Naive thymus-derived CD4-positive, alpha-beta T cell (primary cell): ENCODE measurements at regions of chr5 and their contacts with region 1.

Region 1: DNA sequence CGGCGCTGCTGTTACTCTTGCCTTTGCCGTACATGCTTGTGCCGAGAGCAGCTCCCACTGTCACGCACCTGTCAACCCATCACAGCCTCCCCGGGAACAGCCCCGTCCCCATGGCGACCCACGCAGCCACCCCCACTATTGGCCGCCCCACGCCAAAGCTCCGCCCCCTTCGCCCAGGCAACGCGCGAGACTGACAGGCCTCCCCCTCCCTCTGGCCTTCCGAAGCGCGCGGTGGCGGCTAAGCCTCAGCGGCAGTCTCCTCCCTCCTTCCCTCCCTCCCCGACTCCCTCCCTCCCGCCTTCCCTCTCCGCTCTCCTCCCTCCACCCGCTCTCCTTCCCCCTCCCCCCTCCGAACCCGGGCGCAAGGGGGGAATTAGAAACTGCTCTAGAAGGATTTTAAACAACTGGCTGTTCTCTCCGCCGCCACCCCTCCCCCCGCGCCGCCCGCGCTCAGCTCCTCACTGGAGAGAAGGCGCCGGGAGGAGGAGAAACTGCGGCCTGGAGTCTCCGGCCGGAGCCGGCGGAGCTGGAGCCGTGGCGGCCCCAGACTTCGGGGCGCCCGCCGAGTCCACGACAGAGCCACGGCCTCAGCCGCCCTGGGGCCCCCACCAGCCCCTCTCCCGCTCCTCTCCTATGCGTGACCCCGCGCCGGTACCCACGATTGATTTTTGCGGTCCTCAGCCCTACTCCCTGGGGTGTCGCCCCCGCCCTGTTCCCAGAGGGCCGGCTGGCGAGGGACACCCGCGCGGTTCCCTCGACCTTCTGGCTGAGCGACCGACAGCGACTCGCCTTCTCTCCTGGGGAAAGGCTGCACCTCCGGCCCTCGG is at the start of gene SSBP2:
- DNase-seq: peak; percentile 99 to 100 (median 99)
- ATAC-seq: peak; percentile 93
- H3K4me3 ChIP-seq: peak within 1 kb of the TSS; percentile 61
- H3K4me3 Mint-ChIP-seq: peak within 1 kb of the TSS; percentile 92 to 100 (median 96)
- H3K27ac ChIP-seq: peak within 1 kb of the TSS; percentile 87
- H3K27ac Mint-ChIP-seq: peak within 1 kb of the TSS; percentile 81 to 96 (median 94)
- H3K4me1 ChIP-seq: peaks cover 6 to 13% of the 10 kb centered on the region in 2 donors
- H3K4me1 Mint-ChIP-seq: peaks cover 21 to 49% (median 38%) of the 10 kb centered on the region in 7 donors
- H3K27me3 ChIP-seq: no peaks in the 10 kb centered on the region
- H3K27me3 Mint-ChIP-seq: peaks cover 0 to 49% (median 0%) of the 10 kb centered on the region in 5 donors
- total RNA-seq, gene SSBP2: 36.7 to 73.1 (median 55.9) TPM

Region 2: DNA sequence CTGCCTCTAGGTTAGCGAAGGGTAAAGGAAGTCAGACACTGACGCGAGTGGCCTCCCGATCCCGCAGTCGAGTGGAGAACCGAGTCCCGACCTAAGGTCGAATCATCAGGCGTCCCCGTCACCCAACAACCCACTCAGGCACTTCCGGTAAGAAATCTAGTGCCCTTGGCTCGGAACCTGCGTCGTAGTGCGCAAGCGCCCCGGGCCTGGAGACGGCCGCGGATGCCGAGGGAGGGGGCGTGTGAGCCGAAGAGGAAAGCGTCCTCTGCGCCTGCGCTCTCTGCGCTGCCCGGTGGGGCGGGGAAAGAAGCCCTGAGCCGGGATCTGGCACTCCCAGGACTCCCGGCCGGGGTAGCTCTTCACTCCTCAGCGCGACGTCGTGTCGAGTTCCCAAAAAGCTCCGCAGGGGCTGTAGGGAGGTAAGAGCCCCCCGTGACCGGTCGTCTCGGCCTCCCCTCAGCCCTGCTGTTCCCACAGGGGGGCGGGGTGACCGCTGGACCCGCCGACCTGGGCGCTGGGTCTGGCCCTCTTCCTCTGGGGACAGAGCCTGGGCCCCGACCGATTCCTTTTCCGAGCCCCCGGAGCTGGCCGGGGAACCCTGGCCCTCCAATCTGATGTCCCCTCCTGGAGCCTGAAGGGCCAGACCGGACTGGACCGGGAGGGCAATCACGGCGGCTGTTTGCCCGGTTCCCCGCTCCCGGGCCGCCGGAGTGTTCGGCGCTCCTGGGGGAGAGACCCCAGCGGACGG is 1343.3 kb before region 1 on chr5 and contains the start of gene ZFYVE16:
- CTCF ChIA-PET with region 1: no interaction called
- POLR2A ChIA-PET with region 1: no interaction called
- intact Hi-C with region 1: loop called in 1 of 2 experiments (anchors 5 kb)
- DNase-seq: peak; percentile 93 to 98 (median 94)
- ATAC-seq: peak; percentile 93
- H3K4me3 ChIP-seq: peak within 1 kb of the TSS; percentile 94
- H3K4me3 Mint-ChIP-seq: peak within 1 kb of the TSS; percentile 91 to 99 (median 96)
- H3K27ac ChIP-seq: peak within 1 kb of the TSS; percentile 85
- H3K27ac Mint-ChIP-seq: peak within 1 kb of the TSS; percentile 97 to 100 (median 99)
- H3K4me1 ChIP-seq: peaks cover 0 to 3% of the 10 kb centered on the region in 2 donors
- H3K4me1 Mint-ChIP-seq: peaks cover 20 to 32% (median 21%) of the 10 kb centered on the region in 7 donors
- H3K27me3 ChIP-seq: no peaks in the 10 kb centered on the region
- H3K27me3 Mint-ChIP-seq: peaks cover 0 to 7% (median 0%) of the 10 kb centered on the region in 5 donors
- total RNA-seq, gene ZFYVE16: 12.0 to 32.0 (median 26.0) TPM

Region 3: DNA sequence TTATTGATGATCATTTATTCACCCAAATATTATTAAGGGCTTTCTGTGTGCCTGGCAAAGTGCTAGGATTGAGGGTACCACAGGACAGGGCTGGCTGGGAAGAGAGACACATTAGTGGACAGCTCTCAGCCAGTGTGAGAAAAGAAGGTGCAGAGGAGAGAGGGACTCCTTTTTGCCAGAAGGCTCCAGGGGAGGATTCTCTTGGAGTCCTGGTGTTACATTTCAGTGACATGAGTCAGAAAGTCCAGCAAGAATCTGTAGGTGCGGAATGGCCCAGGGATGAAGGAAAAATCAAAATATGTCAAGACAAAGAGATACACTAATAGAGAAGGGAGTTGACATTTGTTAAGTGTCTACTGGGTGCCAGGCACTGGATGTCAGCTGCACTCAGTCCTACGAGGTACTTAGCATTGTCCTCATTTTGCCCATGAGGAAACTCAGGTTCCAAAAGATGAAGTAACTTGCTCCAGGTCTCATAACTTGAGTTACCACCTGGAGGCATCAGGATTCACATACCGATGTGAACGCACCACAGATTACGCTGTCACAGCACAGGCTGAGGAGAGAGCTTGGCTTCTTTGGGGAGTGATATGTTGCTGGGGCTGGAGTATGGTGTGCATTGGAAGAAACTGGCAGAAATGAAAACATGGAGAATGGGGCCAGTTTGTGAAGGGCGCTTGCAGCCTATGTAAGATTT is 730.6 kb before region 1 on chr5:
- CTCF ChIA-PET with region 1: no interaction called
- POLR2A ChIA-PET with region 1: no interaction called
- intact Hi-C with region 1: no loop called
- DNase-seq: no peak
- ATAC-seq: no peak
- H3K4me3 ChIP-seq: no peak overlapping the region
- H3K4me3 Mint-ChIP-seq: peak overlapping the region in 7 of 10 donors; percentile 1 to 51 (median 15)
- H3K27ac ChIP-seq: no peak overlapping the region
- H3K27ac Mint-ChIP-seq: peak overlapping the region in 5 of 9 donors; percentile 49 to 93 (median 70)
- H3K4me1 ChIP-seq: peaks cover 12 to 62% of the 10 kb centered on the region in 2 donors
- H3K4me1 Mint-ChIP-seq: peaks cover 53 to 97% (median 91%) of the 10 kb centered on the region in 7 donors
- H3K27me3 ChIP-seq: no peaks in the 10 kb centered on the region
- H3K27me3 Mint-ChIP-seq: no peaks in the 10 kb centered on the region

Region 4: DNA sequence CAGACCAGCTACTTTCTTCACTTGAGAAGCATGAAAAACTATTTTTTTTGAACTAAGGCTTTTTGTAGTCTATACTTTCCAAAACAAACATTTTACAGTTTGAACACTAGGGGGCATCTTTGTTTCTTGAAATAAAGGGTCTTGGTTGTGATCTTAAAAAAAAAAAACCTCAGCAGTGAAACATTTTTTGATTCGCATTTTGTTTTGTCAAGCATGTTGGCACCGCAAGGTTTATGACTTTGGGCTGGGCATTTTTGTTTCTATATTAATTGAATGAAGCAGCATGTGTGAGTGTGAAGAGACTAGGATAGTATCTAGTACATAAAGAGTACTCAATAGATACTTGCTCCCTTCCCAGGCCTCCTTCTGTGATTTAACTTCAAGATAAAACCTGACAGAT is 325.7 kb before region 1 on chr5:
- CTCF ChIA-PET with region 1: interaction called, 4 read pairs
- POLR2A ChIA-PET with region 1: no interaction called
- intact Hi-C with region 1: loop called (anchors 1 to 2 kb)
- DNase-seq: peak in 7 of 9 donors; percentile 15 to 72 (median 58)
- ATAC-seq: peak; percentile 73
- H3K4me3 ChIP-seq: no peak overlapping the region
- H3K4me3 Mint-ChIP-seq: peak overlapping the region in 2 of 10 donors; percentile 6 to 8
- H3K27ac ChIP-seq: no peak overlapping the region
- H3K27ac Mint-ChIP-seq: peak overlapping the region in 6 of 9 donors; percentile 9 to 65 (median 48)
- H3K4me1 ChIP-seq: peaks cover 0 to 6% of the 10 kb centered on the region in 2 donors
- H3K4me1 Mint-ChIP-seq: peaks cover 3 to 25% (median 13%) of the 10 kb centered on the region in 7 donors
- H3K27me3 ChIP-seq: no peaks in the 10 kb centered on the region
- H3K27me3 Mint-ChIP-seq: no peaks in the 10 kb centered on the region

Region 5: DNA sequence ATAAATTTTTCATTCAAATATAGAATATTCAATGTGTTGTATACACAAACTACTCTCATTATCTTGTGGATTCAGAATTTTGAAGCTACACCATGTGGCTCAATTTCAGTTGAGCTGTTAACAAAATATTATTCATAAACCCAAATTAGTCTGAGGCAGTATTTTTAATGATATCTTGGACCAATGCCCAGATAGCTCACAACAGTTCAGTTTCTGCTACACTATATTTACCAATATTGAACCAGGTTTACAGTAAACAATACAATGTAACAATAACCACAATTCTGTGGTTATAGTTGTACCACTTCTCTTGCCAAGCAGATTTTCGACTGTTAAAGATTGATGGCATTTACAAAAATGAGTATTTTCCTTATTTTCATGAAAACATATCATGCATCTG is 100.2 kb before region 1 on chr5:
- CTCF ChIA-PET with region 1: no interaction called
- POLR2A ChIA-PET with region 1: no interaction called
- intact Hi-C with region 1: loop called in 1 of 2 experiments (anchors 5 kb)
- DNase-seq: no peak
- ATAC-seq: no peak
- H3K4me3 ChIP-seq: no peak overlapping the region
- H3K4me3 Mint-ChIP-seq: no peak overlapping the region
- H3K27ac ChIP-seq: no peak overlapping the region
- H3K27ac Mint-ChIP-seq: no peak overlapping the region
- H3K4me1 ChIP-seq: no peaks in the 10 kb centered on the region
- H3K4me1 Mint-ChIP-seq: peaks cover 0 to 49% (median 23%) of the 10 kb centered on the region in 7 donors
- H3K27me3 ChIP-seq: no peaks in the 10 kb centered on the region
- H3K27me3 Mint-ChIP-seq: no peaks in the 10 kb centered on the region

Region 6: GRCh38 chr5:81675846-81676245 is 75.4 kb before region 1 on chr5:
- CTCF ChIA-PET with region 1: no interaction called
- POLR2A ChIA-PET with region 1: no interaction called
- intact Hi-C with region 1: no loop called
- DNase-seq: no peak
- ATAC-seq: no peak
- H3K4me3 ChIP-seq: no peak overlapping the region
- H3K4me3 Mint-ChIP-seq: peak overlapping the region in 1 of 10 donors; percentile 49
- H3K27ac ChIP-seq: no peak overlapping the region
- H3K27ac Mint-ChIP-seq: no peak overlapping the region
- H3K4me1 ChIP-seq: no peaks in the 10 kb centered on the region
- H3K4me1 Mint-ChIP-seq: peaks cover 0 to 84% (median 56%) of the 10 kb centered on the region in 7 donors
- H3K27me3 ChIP-seq: no peaks in the 10 kb centered on the region
- H3K27me3 Mint-ChIP-seq: no peaks in the 10 kb centered on the region

Region 7: DNA sequence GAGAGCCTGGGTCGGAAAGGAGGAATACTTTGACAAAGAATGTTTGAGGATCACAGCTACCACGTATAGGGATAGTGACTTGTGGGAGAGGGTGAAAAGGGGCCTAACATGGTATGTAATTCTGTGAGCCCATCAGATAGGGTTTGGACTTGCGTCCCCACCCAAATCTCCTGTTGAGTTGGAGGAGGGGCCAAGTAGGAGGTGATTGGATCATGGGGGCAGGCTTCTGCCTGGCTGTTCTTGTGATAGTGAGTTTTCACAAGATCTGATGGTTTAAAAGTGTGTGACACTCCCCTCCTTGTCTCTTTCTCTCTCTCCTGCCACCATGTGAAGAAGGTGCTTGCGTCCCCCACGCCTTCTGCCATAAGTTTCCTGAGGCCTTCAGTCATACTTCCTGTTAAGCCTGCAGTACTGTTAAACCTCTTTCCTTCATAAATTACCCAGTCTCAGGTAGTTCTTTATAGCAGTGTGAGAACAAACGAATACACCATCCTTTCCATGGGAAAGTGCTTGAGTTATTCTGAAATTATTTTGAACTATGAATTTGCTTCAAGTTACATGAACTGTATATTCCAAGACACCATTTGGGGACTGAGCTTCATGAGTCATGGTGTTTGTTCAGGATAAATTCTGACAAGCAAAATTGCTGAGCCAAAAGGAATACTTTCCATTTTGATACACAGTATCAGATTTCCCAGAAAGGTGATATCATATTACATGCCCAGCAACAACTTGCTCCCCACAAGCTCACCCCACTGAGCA is 68.5 kb after region 1 on chr5:
- CTCF ChIA-PET with region 1: no interaction called
- POLR2A ChIA-PET with region 1: no interaction called
- intact Hi-C with region 1: loop called (anchors 2 kb)
- DNase-seq: no peak
- ATAC-seq: no peak
- H3K4me3 ChIP-seq: no peak overlapping the region
- H3K4me3 Mint-ChIP-seq: peak overlapping the region in 3 of 10 donors; percentile 15 to 39 (median 35)
- H3K27ac ChIP-seq: no peak overlapping the region
- H3K27ac Mint-ChIP-seq: peak overlapping the region in 8 of 9 donors; percentile 9 to 83 (median 46)
- H3K4me1 ChIP-seq: peaks cover 0 to 31% of the 10 kb centered on the region in 2 donors
- H3K4me1 Mint-ChIP-seq: peaks cover 30 to 63% (median 54%) of the 10 kb centered on the region in 7 donors
- H3K27me3 ChIP-seq: no peaks in the 10 kb centered on the region
- H3K27me3 Mint-ChIP-seq: peaks cover 0 to 3% (median 0%) of the 10 kb centered on the region in 5 donors

Region 8: DNA sequence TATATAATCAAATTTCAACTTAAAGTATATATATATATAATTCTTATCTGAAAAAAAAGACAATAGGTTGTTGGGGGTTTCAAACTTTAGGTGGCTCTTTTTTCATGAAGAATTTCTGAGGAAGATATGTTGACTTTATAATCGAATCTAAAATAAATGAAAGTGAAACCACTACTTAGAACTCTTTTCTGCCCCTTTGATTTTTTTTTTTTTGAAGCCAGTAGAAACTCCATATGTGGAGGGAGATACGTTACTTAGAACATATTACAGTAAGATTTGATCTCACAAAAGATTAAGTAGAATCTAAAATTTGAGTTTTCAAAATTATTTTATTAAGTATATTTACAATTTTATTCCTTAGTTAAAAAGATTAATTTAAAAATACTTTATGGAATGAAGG is 317.5 kb after region 1 on chr5:
- CTCF ChIA-PET with region 1: no interaction called
- POLR2A ChIA-PET with region 1: no interaction called
- intact Hi-C with region 1: loop called (anchors 1 to 10 kb)
- DNase-seq: peak in 6 of 9 donors; percentile 3 to 53 (median 47)
- ATAC-seq: peak; percentile 52
- H3K4me3 ChIP-seq: no peak overlapping the region
- H3K4me3 Mint-ChIP-seq: peak overlapping the region; percentile 27 to 84 (median 73)
- H3K27ac ChIP-seq: no peak overlapping the region
- H3K27ac Mint-ChIP-seq: peak overlapping the region in 7 of 9 donors; percentile 4 to 69 (median 58)
- H3K4me1 ChIP-seq: peaks cover 0 to 3% of the 10 kb centered on the region in 2 donors
- H3K4me1 Mint-ChIP-seq: peaks cover 0 to 21% (median 5%) of the 10 kb centered on the region in 7 donors
- H3K27me3 ChIP-seq: no peaks in the 10 kb centered on the region
- H3K27me3 Mint-ChIP-seq: no peaks in the 10 kb centered on the region

Region 9: DNA sequence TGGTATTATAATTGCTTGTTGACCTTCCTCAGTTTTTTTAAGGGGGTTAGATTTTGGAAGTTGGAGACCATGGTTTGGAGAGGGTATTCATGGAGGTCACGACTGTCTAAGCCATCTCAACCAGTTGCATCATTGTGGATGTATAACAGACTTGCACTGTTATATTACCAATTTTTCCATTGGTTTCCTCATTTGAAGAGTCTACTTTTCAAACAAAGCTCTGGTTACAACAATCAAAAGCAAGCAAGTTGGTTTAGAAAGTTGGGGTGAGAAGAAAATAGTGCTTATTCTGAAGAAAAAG is 423.6 kb after region 1 on chr5:
- CTCF ChIA-PET with region 1: no interaction called
- POLR2A ChIA-PET with region 1: no interaction called
- intact Hi-C with region 1: no loop called
- DNase-seq: no peak
- ATAC-seq: no peak
- H3K4me3 ChIP-seq: no peak overlapping the region
- H3K4me3 Mint-ChIP-seq: no peak overlapping the region
- H3K27ac ChIP-seq: no peak overlapping the region
- H3K27ac Mint-ChIP-seq: peak overlapping the region in 1 of 9 donors; percentile 6
- H3K4me1 ChIP-seq: no peaks in the 10 kb centered on the region
- H3K4me1 Mint-ChIP-seq: peaks cover 0 to 8% (median 0%) of the 10 kb centered on the region in 7 donors
- H3K27me3 ChIP-seq: no peaks in the 10 kb centered on the region
- H3K27me3 Mint-ChIP-seq: no peaks in the 10 kb centered on the region

Region 10: DNA sequence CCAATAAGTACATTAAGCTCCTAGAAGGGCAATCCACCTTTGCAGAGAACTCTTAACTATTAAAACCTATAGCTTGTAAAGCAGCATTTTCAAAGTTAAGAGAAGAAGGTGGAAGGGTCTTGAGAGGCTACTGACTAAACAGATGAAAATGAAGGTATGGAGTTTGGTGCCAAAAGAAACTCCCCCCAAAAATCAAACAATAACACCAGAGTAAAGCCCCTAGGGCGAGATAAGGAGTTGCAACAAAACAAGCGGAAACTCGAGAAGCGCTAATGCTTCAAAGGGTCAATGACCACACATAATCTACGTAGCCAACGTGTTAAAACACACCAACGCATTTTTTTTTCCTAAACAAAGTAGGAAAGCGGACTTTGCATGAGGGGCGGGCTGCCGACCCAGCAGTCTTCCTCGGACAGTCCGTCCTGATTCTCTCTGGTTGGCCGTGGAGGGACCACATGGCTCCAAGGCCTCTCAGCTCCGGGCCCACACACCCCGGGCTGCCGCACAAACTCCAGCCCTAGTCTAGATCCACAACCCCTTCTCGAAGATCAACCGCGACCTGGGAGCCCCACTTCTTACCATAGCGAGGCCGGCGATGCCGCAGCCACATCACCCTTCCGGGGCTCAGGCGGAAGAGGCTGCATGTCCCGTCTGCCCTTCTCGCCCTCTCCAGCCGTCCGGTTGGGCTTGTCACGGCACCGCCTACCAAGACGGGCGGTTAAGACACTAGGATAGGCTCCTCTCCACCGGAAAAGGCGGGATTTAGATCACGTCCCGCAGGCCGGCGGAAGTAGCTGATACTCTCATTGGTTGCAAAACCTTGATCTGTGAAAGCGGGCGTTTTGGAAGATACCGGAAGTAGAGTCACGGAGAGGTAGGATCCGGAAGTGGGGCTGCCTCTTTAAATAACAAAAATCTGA is 1325.8 kb after region 1 on chr5 and contains the starts of genes TMEM167A and XRCC4:
- CTCF ChIA-PET with region 1: no interaction called
- POLR2A ChIA-PET with region 1: no interaction called
- intact Hi-C with region 1: loop called (anchors 5 to 10 kb)
- DNase-seq: peak; percentile 71 to 97 (median 94)
- ATAC-seq: peak; percentile 99
- H3K4me3 ChIP-seq: peak within 1 kb of the TSS; percentile 78
- H3K4me3 Mint-ChIP-seq: peak within 1 kb of the TSS; percentile 93 to 99 (median 98)
- H3K27ac ChIP-seq: peak within 1 kb of the TSS; percentile 83
- H3K27ac Mint-ChIP-seq: peak within 1 kb of the TSS; percentile 95 to 99 (median 97)
- H3K4me1 ChIP-seq: peaks cover 5 to 16% of the 10 kb centered on the region in 2 donors
- H3K4me1 Mint-ChIP-seq: peaks cover 35 to 65% (median 62%) of the 10 kb centered on the region in 7 donors
- H3K27me3 ChIP-seq: no peaks in the 10 kb centered on the region
- H3K27me3 Mint-ChIP-seq: no peaks in the 10 kb centered on the region
- total RNA-seq, gene TMEM167A: 39.5 to 73.4 (median 42.3) TPM
- total RNA-seq, gene XRCC4: 2.9 to 7.4 (median 4.7) TPM